HCT116 (cell line): ENCODE measurements at regions of chr4 and their contacts with region 1.

Region 1: DNA sequence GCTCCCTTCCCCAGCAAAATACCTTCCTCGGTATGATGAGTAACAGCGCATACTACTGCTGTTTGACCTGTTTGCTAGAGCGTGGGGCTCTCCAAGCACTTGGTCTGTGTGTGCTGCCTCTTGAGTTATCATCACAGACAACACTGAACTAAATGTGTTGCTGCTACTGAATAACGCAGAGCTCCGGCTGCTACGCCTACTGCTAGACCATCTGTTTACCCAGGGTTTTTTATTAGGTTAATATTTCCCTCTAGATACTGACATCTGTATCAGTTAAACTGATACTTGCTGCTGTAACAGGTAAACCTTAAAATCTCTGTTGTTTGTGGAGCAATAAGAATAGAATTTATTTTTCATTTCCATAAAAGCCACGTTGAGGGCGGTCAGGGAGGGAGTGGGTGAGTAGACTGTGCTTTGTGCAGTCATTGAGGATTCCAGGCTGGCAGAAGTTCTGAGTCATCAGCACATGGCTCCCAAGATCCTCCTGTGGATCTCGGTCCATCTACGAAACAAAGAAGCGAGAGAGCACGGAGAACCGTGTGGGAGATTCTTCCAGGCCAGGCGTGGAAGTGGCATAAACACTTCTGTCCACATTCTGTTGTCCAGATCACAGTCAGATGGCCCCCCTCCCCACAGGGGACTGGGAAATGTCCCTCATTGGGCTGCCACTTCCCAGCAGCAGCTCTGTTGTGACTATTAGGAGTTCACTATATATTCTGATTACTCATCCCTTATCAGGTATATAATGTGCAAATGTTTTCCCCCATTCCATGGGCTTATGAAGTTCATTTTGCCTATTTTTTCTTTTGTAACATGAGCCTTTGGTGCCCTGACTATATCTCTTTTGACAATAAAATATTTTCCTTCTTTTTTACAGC is 14.1 kb downstream of the GRK4 start:
- DNase-seq: no peak
- ATAC-seq: 0 out of 2 replicates have a peak, but pooled peaks have one; percentile 48
- H3K4me3 ChIP-seq: no peak overlapping the region
- H3K27ac ChIP-seq: no peak overlapping the region
- H3K4me1 ChIP-seq: peaks cover 0 to 18% of the 10 kb centered on the region in 2 experiments; a peak in 2 of 4 replicates
- H3K27me3 ChIP-seq: no peaks in the 10 kb centered on the region
- CTCF ChIP-seq: no peak
- POLR2A ChIP-seq: no peak
- RAD21 ChIP-seq: no peak

Region 2: GRCh38 chr4:2963175-2963965 is 14.1 kb before region 1 on chr4 and contains the starts of genes GRK4 and NOP14:
- CTCF ChIA-PET with region 1: interaction called, 23 read pairs
- POLR2A ChIA-PET with region 1: interaction called, 9 read pairs
- RAD21 ChIA-PET with region 1: no interaction called
- intact Hi-C with region 1: no loop called
- DNase-seq: peak; percentile 93
- ATAC-seq: peak; percentile 92
- H3K4me3 ChIP-seq: peak within 1 kb of the TSS; percentile 63 to 94
- H3K27ac ChIP-seq: peak within 1 kb of the TSS; percentile 81
- H3K4me1 ChIP-seq: peaks cover 12 to 24% of the 10 kb centered on the region in 2 experiments; a peak in 3 of 4 replicates
- H3K27me3 ChIP-seq: no peaks in the 10 kb centered on the region
- CTCF ChIP-seq: 0 out of 6 replicates have a peak, but pooled peaks of 2 of the 3 experiments have one; percentile 4 to 14
- POLR2A ChIP-seq: peak; percentile 66
- RAD21 ChIP-seq: 0 out of 2 replicates have a peak, but pooled peaks have one; percentile 19
- total RNA-seq, gene GRK4: 4.2 TPM
- total RNA-seq, gene NOP14: 67.3 TPM

Region 3: DNA sequence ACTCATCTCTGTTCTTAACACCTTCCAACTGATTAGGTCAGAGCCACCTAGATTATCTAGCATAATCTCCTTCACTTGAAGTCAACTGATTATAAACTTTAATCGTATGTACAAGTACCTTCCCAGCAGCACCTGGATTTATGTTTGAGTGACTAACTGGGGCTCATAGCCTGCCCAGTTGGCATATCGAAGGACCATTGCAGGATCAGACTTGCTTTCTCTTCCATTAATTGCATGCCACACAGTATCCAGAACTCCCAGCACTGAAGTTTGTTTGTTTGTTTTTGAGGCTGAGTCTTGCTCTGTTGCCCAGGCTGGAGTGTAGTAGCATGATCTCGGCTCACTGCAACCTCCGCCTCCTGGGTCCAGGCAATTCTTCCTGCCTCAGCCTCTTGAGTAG is 13.8 kb after region 1 on chr4:
- CTCF ChIA-PET with region 1: interaction called, 12 read pairs
- POLR2A ChIA-PET with region 1: no interaction called
- RAD21 ChIA-PET with region 1: no interaction called
- intact Hi-C with region 1: no loop called
- DNase-seq: no peak
- ATAC-seq: no peak
- H3K4me3 ChIP-seq: no peak overlapping the region
- H3K27ac ChIP-seq: no peak overlapping the region
- H3K4me1 ChIP-seq: no peaks in the 10 kb centered on the region
- H3K27me3 ChIP-seq: no peaks in the 10 kb centered on the region
- CTCF ChIP-seq: no peak
- POLR2A ChIP-seq: no peak
- RAD21 ChIP-seq: no peak

Region 4: DNA sequence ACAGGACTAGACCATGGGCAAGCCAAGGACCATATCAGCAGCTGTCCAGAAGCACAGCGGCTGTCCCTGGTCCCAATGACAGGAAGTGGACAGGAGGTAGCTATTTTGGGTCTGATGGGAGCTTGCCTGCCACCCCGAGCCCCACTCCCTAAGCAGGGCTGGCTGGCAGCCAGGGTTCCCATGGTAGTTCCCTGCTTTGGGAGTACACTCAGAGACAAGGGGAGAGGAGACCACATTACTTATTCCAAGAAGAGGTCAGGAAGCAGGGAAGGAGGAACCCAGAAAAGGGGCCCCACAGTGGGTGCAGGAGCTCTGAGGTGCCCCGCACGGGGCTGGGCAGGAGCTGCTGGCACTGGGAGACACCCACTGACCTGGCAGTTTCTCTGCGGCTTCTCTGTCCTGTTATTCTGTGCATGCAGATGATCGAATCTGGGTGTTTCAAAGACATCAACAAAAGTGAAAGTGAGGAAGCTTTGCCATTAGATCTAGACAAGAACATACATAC is 60.6 kb after region 1 on chr4:
- CTCF ChIA-PET with region 1: interaction called, 4 read pairs
- POLR2A ChIA-PET with region 1: no interaction called
- RAD21 ChIA-PET with region 1: no interaction called
- intact Hi-C with region 1: loop called (anchors 1 kb)
- DNase-seq: no peak
- ATAC-seq: no peak
- H3K4me3 ChIP-seq: no peak overlapping the region
- H3K27ac ChIP-seq: no peak overlapping the region
- H3K4me1 ChIP-seq: peaks cover 0 to 10% of the 10 kb centered on the region in 2 experiments; a peak in 2 of 4 replicates
- H3K27me3 ChIP-seq: no peaks in the 10 kb centered on the region
- CTCF ChIP-seq: no peak
- POLR2A ChIP-seq: no peak
- RAD21 ChIP-seq: no peak

Region 5: GRCh38 chr4:3369781-3370674 is 392.6 kb after region 1 on chr4:
- CTCF ChIA-PET with region 1: no interaction called
- POLR2A ChIA-PET with region 1: no interaction called
- RAD21 ChIA-PET with region 1: no interaction called
- intact Hi-C with region 1: no loop called
- DNase-seq: no peak
- ATAC-seq: no peak
- H3K4me3 ChIP-seq: no peak overlapping the region
- H3K27ac ChIP-seq: no peak overlapping the region
- H3K4me1 ChIP-seq: no peaks in the 10 kb centered on the region
- H3K27me3 ChIP-seq: no peaks in the 10 kb centered on the region
- CTCF ChIP-seq: no peak
- POLR2A ChIP-seq: no peak
- RAD21 ChIP-seq: no peak